A673 (cell line): ENCODE measurements at regions of chr11 and their contacts with region 1.

Region 1: DNA sequence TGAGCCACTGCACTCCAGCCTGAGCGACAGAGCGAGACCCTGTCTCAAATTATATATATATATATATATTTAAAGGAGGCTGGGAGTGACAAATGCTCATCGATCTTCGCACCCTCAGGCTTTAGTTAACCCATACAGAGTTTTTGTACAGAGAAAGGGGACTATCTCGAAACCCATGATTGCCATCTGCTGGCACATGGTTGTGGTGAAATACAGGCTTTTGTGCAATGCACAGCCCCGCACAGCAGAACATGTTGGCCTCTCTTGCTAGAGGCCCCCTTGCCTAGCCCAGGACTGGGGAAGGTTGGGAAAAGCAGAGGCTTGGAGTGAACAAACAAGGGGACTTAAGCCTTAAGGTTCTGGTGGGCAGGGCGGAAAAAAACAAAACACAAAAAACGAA is 3.6 kb downstream of the MYBPC3 start:
- DNase-seq: peak; percentile 89
- H3K4me3 ChIP-seq: no peak overlapping the region
- H3K27ac ChIP-seq: no peak overlapping the region
- H3K4me1 ChIP-seq: no peaks in the 10 kb centered on the region
- H3K27me3 ChIP-seq: no peaks in the 10 kb centered on the region
- CTCF ChIP-seq: peak; percentile 70

Region 2: DNA sequence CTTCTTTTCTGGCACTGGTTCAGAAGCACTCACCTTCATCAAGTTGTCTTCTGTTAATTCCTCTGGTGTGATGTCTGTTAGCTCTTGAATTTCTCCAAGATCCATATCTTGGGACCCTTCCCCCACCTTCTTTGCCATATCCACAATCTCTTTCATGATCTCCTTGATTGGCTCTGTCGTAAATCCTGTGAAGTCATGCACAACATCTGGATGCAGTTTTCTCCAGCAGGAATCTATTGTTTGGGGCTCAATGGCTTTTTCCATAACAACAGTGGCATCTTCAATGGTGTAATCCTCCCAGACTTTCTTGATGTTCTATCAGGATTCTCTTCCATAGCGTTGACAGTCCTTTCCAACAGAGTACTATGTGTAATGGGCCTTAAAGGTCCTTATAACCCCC is 315.4 kb before region 1 on chr11:
- CTCF ChIA-PET with region 1: no interaction called
- POLR2A ChIA-PET with region 1: no interaction called
- intact Hi-C with region 1: no loop called
- DNase-seq: peak; percentile 88
- H3K4me3 ChIP-seq: no peak overlapping the region
- H3K27ac ChIP-seq: peak overlapping the region; percentile 12
- H3K4me1 ChIP-seq: peaks cover 18% of the 10 kb centered on the region
- H3K27me3 ChIP-seq: no peaks in the 10 kb centered on the region
- CTCF ChIP-seq: no peak

Region 3: GRCh38 chr11:47578524-47579460 is 229.9 kb after region 1 on chr11 and contains the starts of genes KBTBD4 and NDUFS3:
- CTCF ChIA-PET with region 1: no interaction called
- POLR2A ChIA-PET with region 1: interaction called, 10 read pairs
- intact Hi-C with region 1: no loop called
- DNase-seq: peak; percentile 98
- H3K4me3 ChIP-seq: peak within 1 kb of the TSS; percentile 69
- H3K27ac ChIP-seq: peak within 1 kb of the TSS; percentile 89
- H3K4me1 ChIP-seq: peaks cover 25% of the 10 kb centered on the region
- H3K27me3 ChIP-seq: no peaks in the 10 kb centered on the region
- CTCF ChIP-seq: no peak
- total RNA-seq, gene KBTBD4: 42.8 and 44.0 TPM in 2 replicates
- total RNA-seq, gene NDUFS3: 412 and 444 TPM in 2 replicates